ENCODE measurements at regions of chr5 and their contacts with region 1.

Region 1: DNA sequence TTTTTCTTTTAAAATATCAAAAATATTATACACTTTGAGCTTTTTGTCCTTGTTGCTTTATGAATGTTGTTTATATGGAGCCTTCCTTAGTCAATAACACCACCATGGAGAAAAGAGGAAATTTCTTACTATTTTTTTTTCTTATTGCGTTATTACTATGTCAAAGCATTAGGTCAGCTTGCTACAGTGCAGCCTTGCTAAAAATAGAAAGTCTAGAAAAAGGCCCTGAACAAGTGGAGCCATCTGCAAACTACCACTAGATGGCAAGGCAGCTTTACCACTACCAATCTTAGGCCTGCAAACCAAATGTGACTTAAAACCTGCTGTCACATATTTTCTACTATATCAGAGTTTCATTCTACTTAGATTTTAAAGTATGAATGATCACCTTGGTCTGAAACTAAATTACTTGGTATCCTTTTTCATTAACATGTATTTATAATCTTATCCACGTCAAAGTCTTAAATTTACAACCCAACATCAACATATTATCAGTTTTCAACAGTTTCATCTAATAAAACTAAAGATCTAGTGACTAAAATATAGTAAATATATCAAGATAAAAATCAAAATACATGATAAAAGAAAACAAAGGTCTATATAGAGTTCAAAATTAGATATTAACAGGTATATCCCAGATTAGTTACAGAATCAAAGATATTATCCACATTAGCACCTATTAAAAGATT is 113.1 kb upstream of the ACOT12 start:
- ATAC-seq: peak; percentile 100
- H3K4me3 ChIP-seq: no peak overlapping the region
- H3K27ac ChIP-seq: no peak overlapping the region
- H3K4me1 ChIP-seq: peaks cover 2 to 5% of the 10 kb centered on the region in 2 donors

Region 2: DNA sequence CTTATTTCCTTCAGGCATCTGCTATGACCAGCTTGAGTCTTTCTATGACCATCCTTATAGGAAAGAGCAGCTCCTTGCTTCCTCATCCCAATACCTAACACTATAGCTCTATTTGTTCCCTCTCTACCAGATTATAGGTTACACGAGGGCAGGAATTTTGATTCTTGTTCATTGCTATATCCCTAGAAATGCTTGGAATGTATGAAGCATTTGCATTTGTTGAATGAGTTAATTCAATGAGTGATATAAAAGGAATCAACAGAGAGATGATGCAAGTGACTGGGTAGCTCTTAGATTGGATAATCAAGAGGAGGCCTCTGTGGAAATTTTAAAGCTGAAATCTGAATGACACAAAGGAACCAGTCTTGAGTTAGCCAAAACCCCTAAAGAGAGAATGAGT is 191.7 kb before region 1 on chr5:
- in situ Hi-C with region 1: no loop called
- ATAC-seq: peak in 3 of 8 experiments; percentile 34 to 79 (median 67)
- H3K4me3 ChIP-seq: no peak overlapping the region
- H3K27ac ChIP-seq: no peak overlapping the region
- H3K4me1 ChIP-seq: no peaks in the 10 kb centered on the region

Region 3: DNA sequence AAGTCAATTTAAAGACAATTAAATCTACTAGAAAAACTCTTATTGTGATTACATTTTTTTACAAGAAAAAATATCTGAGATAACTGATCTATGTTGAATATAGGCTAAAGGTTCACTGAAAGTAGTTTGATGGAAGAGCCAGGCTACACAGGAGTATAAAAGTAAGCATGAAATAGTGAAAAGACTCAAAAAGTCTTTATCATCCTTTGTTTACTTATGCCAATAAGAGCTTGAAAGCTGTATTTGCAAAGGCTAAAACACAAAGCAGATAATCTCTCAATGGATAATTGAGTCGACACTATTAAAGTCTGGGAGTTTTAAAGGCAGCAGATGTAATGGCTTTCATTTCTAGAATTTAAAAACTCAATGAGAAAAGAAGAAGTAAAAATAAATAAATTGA is 201.8 kb after region 1 on chr5:
- in situ Hi-C with region 1: no loop called
- ATAC-seq: peak in 1 of 8 experiments; percentile 53
- H3K4me3 ChIP-seq: no peak overlapping the region
- H3K27ac ChIP-seq: no peak overlapping the region
- H3K4me1 ChIP-seq: no peaks in the 10 kb centered on the region

Region 4: DNA sequence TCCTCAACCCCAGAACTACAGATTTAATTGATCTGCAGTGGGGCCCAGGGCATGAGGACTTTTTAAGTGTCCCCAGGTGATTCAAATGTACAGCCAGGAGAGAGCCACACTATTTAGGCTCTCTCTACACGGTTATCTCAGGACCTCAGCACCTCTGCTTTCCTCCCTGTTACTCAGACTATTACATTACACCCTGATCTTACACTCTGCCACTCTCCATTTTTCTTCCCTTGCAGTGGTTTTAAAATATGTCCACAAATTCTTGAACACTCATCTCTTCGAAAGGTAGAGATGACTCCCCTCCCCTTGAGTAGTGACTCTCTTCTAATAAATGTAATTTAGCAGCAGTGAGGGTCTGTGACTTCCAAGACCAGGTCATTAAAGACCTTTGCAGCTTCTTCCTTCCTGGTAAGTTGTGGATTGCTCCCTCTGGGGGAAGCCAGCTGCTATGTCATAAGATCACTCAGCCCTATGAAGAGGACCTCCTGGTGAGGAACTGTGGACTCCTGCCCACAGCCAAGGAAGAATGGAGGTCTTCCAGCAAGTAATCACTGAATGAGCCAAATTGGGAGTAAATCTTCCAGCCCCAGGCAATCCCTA is 331.4 kb after region 1 on chr5:
- in situ Hi-C with region 1: loop called in 1 of 9 experiments (anchors 25 kb)
- ATAC-seq: peak in 4 of 8 experiments; percentile 42 to 79 (median 68)
- H3K4me3 ChIP-seq: no peak overlapping the region
- H3K27ac ChIP-seq: no peak overlapping the region
- H3K4me1 ChIP-seq: peaks cover 10 to 33% of the 10 kb centered on the region in 2 donors